Right cardiac atrium (tissue), 5 donors: ENCODE measurements at regions of chr5 and their contacts with region 1.

Region 1: GRCh38 chr5:151157426-151158286 is at the start of gene ANXA6:
- DNase-seq: peak; percentile 92 to 97 (median 96)
- ATAC-seq: peak; percentile 98 to 99
- H3K4me3 ChIP-seq: peak within 1 kb of the TSS; percentile 83
- H3K27ac ChIP-seq: peak within 1 kb of the TSS; percentile 90
- H3K4me1 ChIP-seq: peaks cover 12% of the 10 kb centered on the region
- H3K27me3 ChIP-seq: no peaks in the 10 kb centered on the region
- total RNA-seq, gene ANXA6: 220 to 238 (median 232) TPM

Region 2: DNA sequence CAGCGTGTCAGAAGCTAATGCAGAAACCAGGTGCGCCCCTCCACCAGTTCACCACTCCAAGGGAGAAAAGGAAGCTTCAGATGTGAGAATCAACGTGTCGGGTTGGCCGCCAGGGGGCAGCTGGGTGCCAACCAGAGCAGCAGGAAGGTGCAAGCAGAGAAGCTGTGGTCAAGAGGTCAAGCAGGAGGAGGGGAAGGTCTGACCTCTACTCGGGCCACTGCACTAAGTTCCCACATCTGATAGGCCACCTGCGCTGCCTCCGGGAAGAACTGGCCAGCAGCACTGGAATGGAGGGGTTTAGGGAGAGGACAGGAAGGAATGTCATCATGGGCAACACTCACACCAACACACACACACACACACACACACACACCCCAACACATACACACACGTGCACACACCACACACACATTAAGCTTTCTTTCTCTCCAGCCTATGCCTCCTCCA is 31.4 kb before region 1 on chr5:
- intact Hi-C with region 1: loop called in 2 of 4 experiments (anchors 5 kb)
- DNase-seq: peak; percentile 74 to 92 (median 91)
- ATAC-seq: peak; percentile 50 to 73
- H3K4me3 ChIP-seq: no peak overlapping the region
- H3K27ac ChIP-seq: no peak overlapping the region
- H3K4me1 ChIP-seq: no peaks in the 10 kb centered on the region
- H3K27me3 ChIP-seq: no peaks in the 10 kb centered on the region